Calu3 (cell line): ENCODE measurements at regions of chr12 and their contacts with region 1.

Region 1: GRCh38 chr12:120234643-120235368 is 30.7 kb downstream of the PXN start:
- DNase-seq: peak; percentile 80
- H3K4me3 Mint-ChIP-seq: peak overlapping the region; percentile 18
- H3K27ac Mint-ChIP-seq: peak overlapping the region; percentile 47
- H3K4me1 Mint-ChIP-seq: peaks cover 74% of the 10 kb centered on the region
- H3K27me3 Mint-ChIP-seq: no peaks in the 10 kb centered on the region
- CTCF ChIP-seq: peak; percentile 49

Region 2: GRCh38 chr12:120257041-120257821 is 22.4 kb after region 1 on chr12:
- CTCF ChIA-PET with region 1: interaction called, 338 read pairs
- intact Hi-C with region 1: no loop called
- DNase-seq: peak; percentile 53
- H3K4me3 Mint-ChIP-seq: no peak overlapping the region
- H3K27ac Mint-ChIP-seq: peak overlapping the region; percentile 33
- H3K4me1 Mint-ChIP-seq: peaks cover 59% of the 10 kb centered on the region
- H3K27me3 Mint-ChIP-seq: no peaks in the 10 kb centered on the region
- CTCF ChIP-seq: no peak

Region 3: DNA sequence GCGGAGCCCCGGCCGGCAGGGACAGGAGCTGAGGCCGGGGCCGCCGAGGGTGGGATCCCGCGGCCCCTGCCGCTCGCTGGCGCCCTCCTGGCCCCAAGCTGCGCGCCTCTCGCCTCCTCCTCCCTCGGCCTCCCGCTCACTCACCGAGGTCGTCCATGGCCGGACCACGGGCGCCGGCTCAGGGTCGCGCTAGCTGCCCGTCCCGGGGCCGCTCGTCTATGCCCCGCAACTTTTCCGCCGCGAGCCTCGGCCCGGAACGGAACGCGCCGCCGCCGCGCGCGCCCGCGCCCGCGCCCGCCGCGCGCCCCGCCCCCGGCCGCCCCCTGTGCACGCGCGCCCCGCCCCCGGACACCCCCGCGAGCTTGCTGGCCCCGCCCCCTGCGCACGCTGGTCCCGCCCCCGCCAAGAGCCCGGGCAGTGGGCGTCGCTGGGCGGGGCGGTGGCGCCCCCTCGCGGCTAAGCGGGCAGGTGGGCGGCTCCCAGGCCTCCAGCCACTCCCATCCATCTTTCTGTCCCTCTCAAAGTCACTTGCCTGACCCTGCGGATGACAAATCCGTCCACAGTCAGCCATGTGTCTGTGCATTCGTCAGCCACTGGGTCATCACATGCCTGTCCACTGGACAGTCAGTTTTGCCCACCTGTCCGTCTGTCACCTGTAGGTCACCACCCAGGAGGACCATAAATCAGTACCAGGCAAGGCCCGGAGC is 30.8 kb after region 1 on chr12 and contains the start of gene PXN:
- CTCF ChIA-PET with region 1: interaction called, 338 read pairs
- intact Hi-C with region 1: no loop called
- DNase-seq: peak; percentile 97
- H3K4me3 Mint-ChIP-seq: peak within 1 kb of the TSS; percentile 87
- H3K27ac Mint-ChIP-seq: peak within 1 kb of the TSS; percentile 74
- H3K4me1 Mint-ChIP-seq: peaks cover 35% of the 10 kb centered on the region
- H3K27me3 Mint-ChIP-seq: no peaks in the 10 kb centered on the region
- CTCF ChIP-seq: peak; percentile 89
- total RNA-seq, gene PXN: 156 and 172 TPM in 2 replicates

Region 4: DNA sequence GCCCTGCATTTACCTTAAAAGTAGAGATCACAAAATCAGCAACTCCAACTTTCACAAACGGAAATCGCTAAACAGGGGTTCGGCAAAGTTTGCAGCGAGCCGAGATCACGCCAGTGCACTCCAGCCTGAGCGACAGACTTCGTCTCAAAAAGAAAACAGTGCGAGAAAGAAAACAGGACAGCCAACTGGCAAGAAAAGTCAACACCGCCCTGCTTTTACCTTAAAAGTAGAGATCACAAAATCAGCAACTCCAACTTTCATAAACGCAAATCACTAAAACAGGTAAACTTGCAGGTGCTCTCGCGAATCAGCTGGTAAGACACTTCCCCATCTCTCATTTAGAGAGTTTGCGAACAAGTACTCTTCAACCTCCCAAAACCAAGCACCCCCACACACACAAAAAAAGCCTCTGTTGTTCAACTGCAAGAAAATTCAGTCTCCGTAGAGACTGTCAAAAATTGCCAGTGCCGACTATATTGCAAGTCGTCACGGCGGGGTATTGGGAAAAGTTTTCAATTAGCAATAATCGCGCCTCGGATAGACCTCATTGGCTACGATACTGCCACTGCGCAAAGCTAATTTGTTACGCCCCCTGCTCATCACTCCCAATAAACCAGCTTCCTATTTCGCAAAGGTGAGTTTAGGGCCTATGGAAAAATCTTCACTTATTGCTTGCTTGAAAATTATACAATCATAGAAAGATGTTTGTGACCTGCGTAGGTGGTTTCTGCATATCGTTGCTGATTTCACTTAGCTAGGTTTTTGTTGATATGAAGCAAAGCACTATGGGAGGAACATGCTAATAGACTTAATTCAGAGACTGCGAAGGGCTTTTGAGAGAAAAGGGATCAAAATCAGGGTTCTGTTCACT is 58.1 kb after region 1 on chr12 and contains the start of gene RNU4-1:
- CTCF ChIA-PET with region 1: interaction called, 53 read pairs
- intact Hi-C with region 1: loop called (anchors 1 kb)
- DNase-seq: peak; percentile 81
- H3K4me3 Mint-ChIP-seq: no peak within 1 kb of the TSS
- H3K27ac Mint-ChIP-seq: no peak within 1 kb of the TSS
- H3K4me1 Mint-ChIP-seq: peaks cover 15% of the 10 kb centered on the region
- H3K27me3 Mint-ChIP-seq: no peaks in the 10 kb centered on the region
- CTCF ChIP-seq: no peak
- total RNA-seq, gene RNU4-1: 2,759 and 3,670 TPM in 2 replicates

Region 5: DNA sequence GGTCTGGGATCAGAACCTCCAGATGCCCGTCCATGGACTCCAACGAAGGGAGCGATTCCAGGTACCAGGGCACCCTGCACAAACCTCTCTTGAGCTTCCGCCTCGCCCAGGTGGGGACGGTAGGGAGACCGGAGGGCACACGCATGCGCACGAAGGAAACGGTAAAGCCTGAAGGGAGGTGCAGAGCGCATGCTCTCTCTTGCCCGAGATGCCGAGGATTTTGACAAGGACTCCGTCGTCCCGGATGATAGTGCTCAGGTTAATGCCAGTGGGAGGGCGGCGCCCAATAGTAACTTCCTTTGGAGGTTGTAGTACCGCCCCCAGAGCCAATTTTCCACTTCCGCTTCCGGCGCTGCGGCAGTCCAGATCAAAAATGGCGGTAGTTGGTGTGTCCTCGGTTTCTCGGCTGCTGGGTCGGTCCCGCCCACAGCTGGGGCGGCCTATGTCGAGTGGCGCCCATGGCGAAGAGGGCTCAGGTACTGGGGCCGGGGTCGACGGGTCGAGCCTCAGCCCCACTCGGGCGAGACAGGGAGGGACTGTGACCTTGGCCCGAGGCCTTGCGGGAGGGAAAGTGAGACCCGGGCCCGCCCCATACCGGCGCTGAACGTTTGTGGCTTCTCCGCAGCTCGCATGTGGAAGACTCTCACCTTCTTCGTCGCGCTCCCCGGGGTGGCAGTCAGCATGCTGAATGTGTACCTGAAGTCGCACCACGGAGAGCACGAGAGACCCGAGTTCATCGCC is 203.1 kb after region 1 on chr12 and contains the start of gene COX6A1:
- CTCF ChIA-PET with region 1: no interaction called
- intact Hi-C with region 1: loop called (anchors 10 kb)
- DNase-seq: peak; percentile 98
- H3K4me3 Mint-ChIP-seq: peak within 1 kb of the TSS; percentile 82
- H3K27ac Mint-ChIP-seq: peak within 1 kb of the TSS; percentile 46
- H3K4me1 Mint-ChIP-seq: no peaks in the 10 kb centered on the region
- H3K27me3 Mint-ChIP-seq: no peaks in the 10 kb centered on the region
- CTCF ChIP-seq: no peak
- total RNA-seq, gene COX6A1: 482 and 487 TPM in 2 replicates

Region 6: GRCh38 chr12:120620624-120621023 is 385.8 kb after region 1 on chr12:
- CTCF ChIA-PET with region 1: no interaction called
- intact Hi-C with region 1: no loop called
- DNase-seq: peak; percentile 41
- H3K4me3 Mint-ChIP-seq: no peak overlapping the region
- H3K27ac Mint-ChIP-seq: no peak overlapping the region
- H3K4me1 Mint-ChIP-seq: peaks cover 10% of the 10 kb centered on the region
- H3K27me3 Mint-ChIP-seq: peaks cover 32% of the 10 kb centered on the region
- CTCF ChIP-seq: no peak